MCF 10A (cell line): ENCODE measurements at regions of chr4 and their contacts with region 1.

Region 1: DNA sequence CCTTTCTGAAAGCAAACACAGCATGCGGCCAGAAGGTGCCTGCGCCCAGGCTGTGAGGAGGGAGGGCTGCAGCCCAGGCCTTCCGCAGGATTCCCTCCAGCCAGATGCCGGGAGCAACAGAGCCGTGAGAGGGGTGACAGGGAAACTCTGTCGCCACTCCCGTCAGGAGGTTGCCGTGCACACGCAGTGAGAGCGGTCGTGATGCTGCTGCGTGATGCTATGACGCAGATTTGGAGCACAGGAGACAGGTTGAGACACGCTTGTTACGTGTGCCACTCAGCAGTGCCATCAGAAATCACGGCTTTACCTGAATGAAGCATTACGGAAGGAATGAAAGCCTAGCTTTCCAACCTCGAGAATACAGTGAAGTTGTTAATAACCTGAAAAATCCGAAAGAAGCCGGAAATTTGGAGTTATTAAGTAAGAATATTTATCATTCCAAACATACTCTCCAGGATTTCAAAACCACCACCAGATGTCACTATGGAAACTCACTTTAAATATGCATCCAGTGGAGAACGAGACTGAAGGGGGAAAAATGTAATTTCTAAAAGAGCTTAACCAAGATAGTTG is 54.4 kb downstream of the FAT1 start:
- DNase-seq: peak; percentile 56
- H3K4me3 Mint-ChIP-seq: peak overlapping the region; percentile 17
- H3K27ac Mint-ChIP-seq: peak overlapping the region; percentile 63
- H3K4me1 Mint-ChIP-seq: peaks cover 34% of the 10 kb centered on the region
- H3K27me3 Mint-ChIP-seq: no peaks in the 10 kb centered on the region
- CTCF ChIP-seq: peak; percentile 18

Region 2: GRCh38 chr4:186428481-186428880 is 240.8 kb before region 1 on chr4:
- CTCF ChIA-PET with region 1: no interaction called
- POLR2A ChIA-PET with region 1: no interaction called
- intact Hi-C with region 1: no loop called
- DNase-seq: no peak
- H3K4me3 Mint-ChIP-seq: no peak overlapping the region
- H3K27ac Mint-ChIP-seq: no peak overlapping the region
- H3K4me1 Mint-ChIP-seq: no peaks in the 10 kb centered on the region
- H3K27me3 Mint-ChIP-seq: no peaks in the 10 kb centered on the region
- CTCF ChIP-seq: no peak

Region 3: GRCh38 chr4:186621959-186622553 is 47.2 kb before region 1 on chr4:
- CTCF ChIA-PET with region 1: no interaction called
- POLR2A ChIA-PET with region 1: no interaction called
- intact Hi-C with region 1: no loop called
- DNase-seq: peak; percentile 68
- H3K4me3 Mint-ChIP-seq: no peak overlapping the region
- H3K27ac Mint-ChIP-seq: no peak overlapping the region
- H3K4me1 Mint-ChIP-seq: peaks cover 9% of the 10 kb centered on the region
- H3K27me3 Mint-ChIP-seq: no peaks in the 10 kb centered on the region
- CTCF ChIP-seq: no peak

Region 4: GRCh38 chr4:186693159-186693815 is 24.0 kb after region 1 on chr4:
- CTCF ChIA-PET with region 1: interaction called, 7 read pairs
- POLR2A ChIA-PET with region 1: interaction called, 11 read pairs
- intact Hi-C with region 1: no loop called
- DNase-seq: peak; percentile 92
- H3K4me3 Mint-ChIP-seq: peak overlapping the region; percentile 21
- H3K27ac Mint-ChIP-seq: peak overlapping the region; percentile 47
- H3K4me1 Mint-ChIP-seq: peaks cover 31% of the 10 kb centered on the region
- H3K27me3 Mint-ChIP-seq: no peaks in the 10 kb centered on the region
- CTCF ChIP-seq: no peak

Region 5: DNA sequence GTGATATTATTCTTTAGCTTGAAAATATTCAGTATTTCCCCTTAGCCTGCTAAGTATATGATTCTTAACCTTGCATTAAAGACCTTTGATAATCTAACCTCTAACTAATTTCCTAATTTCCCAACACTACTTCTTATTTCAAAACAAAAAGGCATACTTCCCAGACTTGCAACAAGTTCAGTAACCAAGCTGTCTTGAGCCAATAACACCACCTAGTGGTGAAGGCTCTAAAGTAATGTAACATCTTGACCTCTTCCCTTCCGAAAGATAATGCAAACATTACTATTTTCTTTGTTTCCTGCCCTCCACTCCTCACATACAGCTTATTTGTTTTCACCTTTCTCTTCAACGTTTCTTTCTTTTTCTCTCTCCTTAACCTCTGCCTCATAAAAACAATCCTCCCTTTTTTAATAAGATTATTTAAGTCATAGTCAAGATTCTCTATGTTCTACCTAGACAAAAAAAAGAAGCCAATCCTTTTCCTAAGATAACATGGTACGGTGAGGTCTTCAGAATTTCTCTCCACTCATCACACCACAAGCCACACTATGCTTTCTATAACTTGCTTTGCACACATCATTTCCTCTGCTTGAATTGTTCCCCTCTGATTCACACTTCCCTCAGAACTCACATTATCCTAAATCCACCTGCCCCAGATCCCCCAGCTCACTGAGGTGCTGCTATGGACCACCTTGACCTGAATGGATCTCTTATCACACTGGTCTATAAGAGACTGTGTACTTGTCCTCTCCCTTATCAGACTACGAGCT is 50.9 kb after region 1 on chr4:
- CTCF ChIA-PET with region 1: interaction called, 18 read pairs
- POLR2A ChIA-PET with region 1: interaction called, 40 read pairs
- intact Hi-C with region 1: loop called (anchors 1 kb)
- DNase-seq: peak; percentile 67
- H3K4me3 Mint-ChIP-seq: no peak overlapping the region
- H3K27ac Mint-ChIP-seq: no peak overlapping the region
- H3K4me1 Mint-ChIP-seq: peaks cover 19% of the 10 kb centered on the region
- H3K27me3 Mint-ChIP-seq: no peaks in the 10 kb centered on the region
- CTCF ChIP-seq: peak; percentile 49